HEK293 (cell line): ENCODE measurements at regions of chr2 and their contacts with region 1.

Region 1: DNA sequence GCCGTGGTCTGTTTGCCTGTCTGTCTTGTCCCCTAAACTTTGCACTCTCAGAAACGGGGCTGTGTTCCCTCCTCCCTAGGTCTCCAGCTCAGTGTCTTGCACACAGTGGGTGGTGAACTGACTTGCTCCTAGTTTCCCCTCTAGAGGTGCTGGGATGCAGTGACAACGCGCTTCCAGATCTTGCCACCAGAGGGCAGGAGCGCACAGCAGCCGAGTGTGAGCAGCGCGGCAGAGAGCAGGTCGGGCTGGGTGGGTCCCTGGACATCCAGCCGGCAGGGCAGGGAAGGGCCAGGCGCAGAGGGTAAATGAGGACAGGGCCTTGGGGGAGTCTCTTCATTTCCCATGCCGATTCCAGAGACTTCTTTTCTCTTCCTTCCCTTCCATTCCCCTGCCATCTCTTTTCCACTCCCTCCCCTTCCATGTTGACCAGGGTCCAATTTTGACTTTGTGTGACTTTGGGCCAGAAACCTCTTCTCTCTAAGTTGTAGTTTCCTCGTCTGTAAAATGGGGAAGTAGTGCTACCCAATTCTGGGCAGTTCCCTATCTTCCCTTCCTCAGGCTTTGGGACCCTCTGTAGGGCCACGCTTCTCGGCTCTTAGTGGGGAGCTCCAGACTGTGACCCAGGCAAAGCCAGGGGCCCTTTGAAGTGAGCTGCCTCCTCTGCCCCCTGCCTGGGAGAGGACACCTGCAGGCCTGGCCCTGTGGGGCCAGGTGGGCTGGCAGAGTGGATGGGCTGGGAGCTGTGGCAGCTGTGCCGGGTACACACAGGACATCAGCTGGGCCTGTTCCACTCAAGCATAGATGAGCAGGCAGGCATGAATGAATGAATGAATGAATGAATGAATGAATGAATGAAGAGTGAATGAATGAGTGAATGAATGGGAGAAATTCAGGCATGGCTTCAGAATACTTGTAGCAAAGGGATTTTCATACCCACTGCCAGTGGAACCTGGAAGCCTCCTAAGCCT is 43.3 kb upstream of the TAF1B start:
- H3K4me3 ChIP-seq: no peak overlapping the region
- H3K27ac ChIP-seq: no peak overlapping the region
- H3K4me1 ChIP-seq: peaks cover 3% of the 10 kb centered on the region; the same call in 1 of the 2 replicates
- CTCF ChIP-seq: peak; percentile 98

Region 2: DNA sequence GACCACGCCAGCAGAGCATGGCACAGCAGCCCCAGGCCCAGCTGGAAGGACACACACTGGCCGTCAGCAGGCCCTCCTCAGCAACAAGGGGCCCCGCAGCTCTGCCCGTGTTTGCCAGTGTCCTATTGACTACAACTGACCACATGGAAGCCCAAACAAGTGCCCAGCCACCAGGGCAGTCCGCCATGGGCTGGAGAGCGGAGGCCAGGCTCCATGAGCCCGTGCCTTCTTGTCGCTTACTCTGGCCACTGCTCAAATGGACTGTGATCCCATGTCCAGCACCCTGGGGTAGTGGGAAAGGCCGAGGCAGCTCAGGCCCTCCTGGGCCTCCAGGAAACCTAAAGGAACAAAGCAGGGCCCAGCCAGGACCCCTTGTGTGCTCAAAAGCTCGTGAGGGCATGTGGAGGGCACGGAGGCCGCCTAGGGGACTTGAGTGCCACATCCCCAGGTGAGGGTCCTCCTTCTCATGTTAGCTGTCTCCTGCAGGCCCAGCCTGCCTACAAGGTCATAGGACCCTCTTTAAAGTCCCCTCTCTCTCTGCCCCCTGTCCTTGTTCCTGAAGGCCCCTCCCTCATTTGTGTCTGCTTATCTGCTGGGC is 10.5 kb before region 1 on chr2:
- CTCF ChIA-PET with region 1: interaction called, 21 read pairs
- POLR2A ChIA-PET with region 1: no interaction called
- H3K4me3 ChIP-seq: no peak overlapping the region
- H3K27ac ChIP-seq: no peak overlapping the region
- H3K4me1 ChIP-seq: no peaks in the 10 kb centered on the region
- CTCF ChIP-seq: no peak

Region 3: DNA sequence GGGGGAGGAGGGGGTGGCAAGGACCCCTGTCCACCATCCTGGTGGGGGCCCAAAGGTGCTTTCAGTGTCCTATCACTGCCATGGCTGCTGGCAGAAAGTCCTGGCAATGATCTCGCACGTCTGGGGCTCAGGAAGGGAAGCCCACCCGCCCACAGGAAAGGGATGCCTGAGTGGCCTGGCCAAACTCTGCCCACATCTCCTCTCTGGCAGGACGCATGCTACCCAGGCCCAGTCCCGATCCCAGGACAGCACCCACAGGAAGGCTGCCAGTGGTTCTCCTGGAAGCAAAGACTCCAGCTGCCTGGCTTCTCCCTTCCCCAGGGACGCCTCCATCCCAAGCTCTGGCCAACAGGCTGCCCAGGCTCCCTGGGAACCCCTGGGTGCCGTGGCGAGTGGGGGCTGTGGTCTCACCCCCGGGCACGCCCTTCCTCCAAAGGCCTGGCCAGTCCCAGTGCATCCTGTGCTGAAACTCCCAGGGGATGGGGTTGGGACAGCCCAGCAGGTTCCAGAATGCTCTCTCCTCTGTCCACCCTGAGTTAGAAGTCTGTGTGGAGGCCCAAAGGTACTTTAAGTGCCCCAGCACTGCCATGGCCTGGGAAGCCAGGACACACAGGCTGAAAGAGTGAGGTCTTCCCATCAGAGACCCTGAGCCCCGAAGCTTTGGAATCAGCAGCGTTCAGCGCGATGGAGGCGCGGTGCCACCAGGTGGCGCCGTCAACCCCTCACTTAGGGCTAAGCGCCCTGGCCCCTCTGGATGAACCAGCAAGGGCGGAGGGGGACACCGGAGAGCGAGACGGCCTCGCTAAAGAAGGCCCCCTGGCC is 13.6 kb after region 1 on chr2:
- CTCF ChIA-PET with region 1: interaction called, 90 read pairs
- POLR2A ChIA-PET with region 1: no interaction called
- H3K4me3 ChIP-seq: no peak overlapping the region
- H3K27ac ChIP-seq: no peak overlapping the region
- H3K4me1 ChIP-seq: no peaks in the 10 kb centered on the region
- CTCF ChIP-seq: peak; percentile 86

Region 4: DNA sequence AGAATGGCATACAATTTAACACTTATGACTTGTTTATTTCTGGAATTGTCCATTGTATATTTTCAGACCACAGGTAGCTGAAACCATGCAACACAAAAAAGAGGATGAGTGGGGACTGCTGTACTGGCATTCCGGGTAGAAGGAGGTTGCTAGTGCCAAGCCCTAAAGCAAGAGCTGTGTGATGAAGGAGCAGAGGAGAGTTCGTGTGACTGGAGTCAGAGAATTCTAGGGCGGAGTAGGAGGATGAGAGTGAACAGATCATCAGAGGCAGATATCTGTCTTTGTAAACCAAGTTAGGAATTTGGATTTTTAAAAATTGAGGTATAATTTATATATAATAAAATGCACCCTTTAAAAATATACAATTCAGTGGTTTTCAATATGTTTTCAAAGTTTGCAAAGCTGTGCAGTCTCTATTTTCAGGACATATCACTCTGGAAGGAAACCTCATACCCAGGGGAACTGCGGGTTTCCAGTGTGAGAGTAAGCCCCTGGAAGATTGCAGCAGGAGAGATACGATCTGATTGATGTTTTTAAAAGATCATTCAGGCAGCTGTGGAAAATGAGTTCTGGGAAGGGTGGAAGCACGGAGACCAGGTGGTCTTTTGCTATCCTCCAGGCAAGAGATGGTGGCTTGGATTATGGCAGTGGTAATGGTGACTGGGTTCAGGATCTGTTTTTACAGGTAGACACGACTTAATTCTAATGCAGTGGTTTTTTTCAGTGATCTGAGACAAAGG is 79.7 kb after region 1 on chr2:
- CTCF ChIA-PET with region 1: no interaction called
- POLR2A ChIA-PET with region 1: no interaction called
- H3K4me3 ChIP-seq: no peak overlapping the region
- H3K27ac ChIP-seq: no peak overlapping the region
- H3K4me1 ChIP-seq: no peaks in the 10 kb centered on the region
- CTCF ChIP-seq: no peak

Region 5: GRCh38 chr2:9950514-9951271 is 150.7 kb after region 1 on chr2:
- CTCF ChIA-PET with region 1: no interaction called
- POLR2A ChIA-PET with region 1: no interaction called
- H3K4me3 ChIP-seq: peak overlapping the region; percentile 53
- H3K27ac ChIP-seq: peak overlapping the region; percentile 61; the same call in 1 of the 2 replicates
- H3K4me1 ChIP-seq: peaks cover 16% of the 10 kb centered on the region
- CTCF ChIP-seq: no peak

Region 6: DNA sequence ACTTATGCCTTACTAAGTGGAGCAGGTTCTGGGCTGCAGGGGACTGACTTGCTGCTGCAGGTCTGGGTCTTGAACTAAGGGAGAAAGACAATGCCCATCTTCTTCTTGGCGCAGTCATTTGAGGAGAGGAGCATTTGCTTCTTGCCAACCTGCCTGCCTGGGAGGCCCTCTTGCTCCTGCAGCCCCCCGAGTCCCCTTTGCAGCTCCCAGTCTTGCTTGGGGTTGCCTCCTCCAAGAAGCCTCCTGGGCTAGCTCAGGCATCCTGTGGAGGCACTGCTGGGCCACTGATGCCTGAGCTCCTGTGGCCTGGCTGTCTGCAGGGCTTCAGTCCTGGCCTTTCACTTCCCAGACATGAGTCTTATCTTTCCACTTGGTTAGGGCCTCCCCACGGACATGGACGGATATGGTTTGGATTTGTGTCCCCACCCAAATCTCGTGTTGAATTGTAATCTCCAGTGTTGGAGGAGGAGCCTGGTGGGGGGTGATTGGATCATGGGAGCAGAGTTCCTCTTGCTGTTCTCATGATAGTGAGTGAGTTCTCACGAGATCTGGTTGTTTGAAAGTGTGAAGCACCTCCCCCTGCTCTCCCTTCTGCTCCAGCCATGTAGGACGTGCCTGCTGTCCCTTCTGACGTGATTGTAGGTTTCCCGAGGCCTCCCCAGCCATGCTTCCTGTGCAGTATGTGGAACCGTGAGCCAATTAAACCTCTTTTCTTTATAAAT is 520.1 kb after region 1 on chr2:
- CTCF ChIA-PET with region 1: no interaction called
- POLR2A ChIA-PET with region 1: interaction called, 13 read pairs
- H3K4me3 ChIP-seq: no peak overlapping the region
- H3K27ac ChIP-seq: no peak overlapping the region
- H3K4me1 ChIP-seq: no peaks in the 10 kb centered on the region
- CTCF ChIP-seq: no peak